A673 (cell line): ENCODE measurements at regions of chr7 and their contacts with region 1.

Region 1: DNA sequence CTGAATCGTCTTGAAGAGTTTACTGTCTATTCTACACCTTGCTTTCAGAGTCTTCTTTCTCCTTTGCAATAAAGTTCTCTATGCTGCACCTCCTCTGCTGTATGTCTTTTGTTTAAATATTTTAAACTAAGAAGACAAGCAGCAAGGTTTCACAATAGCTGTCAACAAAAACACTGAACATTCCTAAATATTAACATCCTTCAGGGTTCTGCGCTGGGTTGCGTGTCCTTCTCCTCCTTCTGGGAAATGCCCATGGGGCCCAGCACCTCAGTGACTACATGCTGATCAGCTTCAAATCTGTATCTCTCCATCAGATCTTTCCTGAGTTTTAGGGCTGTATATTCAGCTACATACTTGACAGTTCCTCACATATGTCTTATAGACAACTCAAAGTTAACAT is 67.8 kb upstream of the TMEM229A start:
- DNase-seq: no peak
- H3K4me3 ChIP-seq: no peak overlapping the region
- H3K27ac ChIP-seq: no peak overlapping the region
- H3K4me1 ChIP-seq: no peaks in the 10 kb centered on the region
- H3K27me3 ChIP-seq: no peaks in the 10 kb centered on the region
- CTCF ChIP-seq: no peak

Region 2: GRCh38 chr7:124171068-124171467 is 70.4 kb after region 1 on chr7:
- CTCF ChIA-PET with region 1: no interaction called
- POLR2A ChIA-PET with region 1: no interaction called
- intact Hi-C with region 1: no loop called
- DNase-seq: peak; percentile 31
- H3K4me3 ChIP-seq: no peak overlapping the region
- H3K27ac ChIP-seq: no peak overlapping the region
- H3K4me1 ChIP-seq: no peaks in the 10 kb centered on the region
- H3K27me3 ChIP-seq: no peaks in the 10 kb centered on the region
- CTCF ChIP-seq: peak; percentile 50

Region 3: DNA sequence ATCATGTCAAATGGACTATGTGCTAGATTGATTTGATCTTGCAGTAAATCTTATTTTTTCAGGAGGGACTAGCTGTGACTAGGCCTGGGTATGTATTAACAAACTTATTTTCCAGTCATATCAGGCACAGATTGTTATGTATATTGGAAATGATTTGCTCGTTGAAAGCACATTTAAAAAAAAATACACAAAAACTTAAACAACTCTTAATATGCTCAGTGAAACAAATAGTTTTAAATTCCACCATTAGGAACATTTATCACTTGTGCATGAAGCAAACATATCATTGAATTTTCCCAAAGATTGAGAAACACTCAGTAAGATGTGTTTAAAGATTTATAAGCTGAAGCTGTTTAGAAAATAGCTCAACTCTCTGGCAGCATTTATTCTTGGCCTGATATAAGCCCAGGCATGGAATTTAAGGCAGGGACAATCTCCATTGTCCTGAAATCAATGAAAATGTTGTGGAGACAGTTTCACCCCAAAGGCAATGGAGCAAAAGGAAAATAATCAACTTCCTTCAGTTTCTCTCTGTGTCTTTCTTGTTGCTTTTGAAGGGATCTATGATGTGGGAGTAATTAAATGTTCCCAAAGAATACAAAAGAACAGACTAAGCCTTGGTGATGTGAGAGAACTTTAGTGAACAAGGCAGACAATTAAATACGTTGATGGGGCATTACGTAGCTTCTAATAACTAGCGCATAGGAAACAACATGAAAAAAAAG is 414.6 kb after region 1 on chr7:
- CTCF ChIA-PET with region 1: no interaction called
- POLR2A ChIA-PET with region 1: no interaction called
- intact Hi-C with region 1: no loop called
- DNase-seq: no peak
- H3K4me3 ChIP-seq: no peak overlapping the region
- H3K27ac ChIP-seq: no peak overlapping the region
- H3K4me1 ChIP-seq: no peaks in the 10 kb centered on the region
- H3K27me3 ChIP-seq: no peaks in the 10 kb centered on the region
- CTCF ChIP-seq: no peak

Region 4: DNA sequence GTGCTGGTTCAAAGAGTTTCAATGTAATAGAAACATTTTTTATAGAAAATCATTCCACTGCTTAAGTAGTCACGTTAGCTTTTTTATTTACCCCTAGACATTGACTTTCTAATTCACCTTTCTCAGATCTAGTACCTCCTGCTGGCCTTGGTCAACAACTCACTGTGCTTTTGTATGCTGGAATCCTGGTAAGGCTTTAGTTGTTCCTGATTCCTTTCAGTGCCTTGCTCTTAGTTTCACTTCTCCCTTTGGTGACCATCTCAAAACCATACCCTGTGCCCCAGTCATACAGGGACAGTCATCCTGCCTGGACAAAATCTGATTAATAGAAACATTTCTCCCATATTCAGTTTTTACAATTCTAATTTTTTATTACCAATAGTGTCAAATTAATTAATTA is 534.8 kb after region 1 on chr7:
- CTCF ChIA-PET with region 1: no interaction called
- POLR2A ChIA-PET with region 1: no interaction called
- intact Hi-C with region 1: no loop called
- DNase-seq: no peak
- H3K4me3 ChIP-seq: no peak overlapping the region
- H3K27ac ChIP-seq: no peak overlapping the region
- H3K4me1 ChIP-seq: no peaks in the 10 kb centered on the region
- H3K27me3 ChIP-seq: no peaks in the 10 kb centered on the region
- CTCF ChIP-seq: no peak

Region 5: DNA sequence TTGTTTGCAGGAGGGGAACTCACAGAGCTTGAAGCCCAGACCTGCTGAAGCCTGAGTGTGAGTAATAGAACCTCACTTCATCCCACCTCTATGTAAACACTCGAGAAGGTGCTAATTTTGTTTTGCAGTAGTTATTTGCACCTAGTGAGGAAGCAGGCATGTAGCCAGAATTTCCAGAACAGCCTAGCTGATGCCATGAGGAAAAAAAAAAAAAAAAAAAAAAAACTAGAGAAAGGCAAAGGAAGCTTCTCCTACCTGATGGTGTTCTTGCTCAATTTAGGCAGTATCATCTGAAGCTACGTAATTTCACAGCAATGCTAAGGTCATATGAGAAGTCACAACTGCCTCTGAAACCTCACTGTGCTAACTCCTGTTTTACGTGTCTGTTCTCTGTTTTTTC is 678.5 kb after region 1 on chr7:
- CTCF ChIA-PET with region 1: interaction called, 13 read pairs
- POLR2A ChIA-PET with region 1: no interaction called
- intact Hi-C with region 1: no loop called
- DNase-seq: no peak
- H3K4me3 ChIP-seq: no peak overlapping the region
- H3K27ac ChIP-seq: no peak overlapping the region
- H3K4me1 ChIP-seq: no peaks in the 10 kb centered on the region
- H3K27me3 ChIP-seq: no peaks in the 10 kb centered on the region
- CTCF ChIP-seq: no peak